ENCODE measurements at regions of chr7 and their contacts with region 1.

Region 1: DNA sequence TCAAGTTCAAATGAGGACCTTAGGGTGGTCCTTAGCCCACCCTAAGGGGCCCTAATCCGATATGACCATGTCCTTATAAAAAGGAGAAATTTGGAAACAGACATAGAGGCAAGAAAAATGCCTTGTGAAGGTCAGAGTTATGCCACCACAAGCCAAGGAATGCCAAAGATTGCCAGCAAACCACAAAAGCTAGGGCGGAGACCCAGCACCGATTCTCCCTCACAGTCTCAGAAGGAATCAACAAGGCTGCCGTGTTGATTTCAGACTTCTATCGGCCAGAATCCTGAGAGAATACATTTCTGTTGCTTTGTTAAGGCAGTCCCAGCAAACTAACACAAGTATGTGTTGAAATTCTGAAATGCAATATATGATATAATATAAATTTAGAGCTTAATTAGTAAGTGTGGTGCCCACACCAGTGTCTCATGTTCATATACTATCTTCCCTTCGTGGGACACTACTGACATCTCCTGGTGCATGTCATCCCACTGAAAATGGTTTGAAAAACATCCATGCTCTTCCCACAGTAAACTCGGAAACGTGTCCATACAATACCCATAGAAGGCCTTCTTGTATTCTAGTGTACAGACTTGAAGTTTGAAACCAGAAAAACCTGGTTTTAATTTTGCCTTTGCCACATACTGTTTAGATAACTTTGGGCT is 349.0 kb downstream of the TNS3 start:
- DNase-seq: no peak
- ATAC-seq: peak; percentile 54

Region 2: DNA sequence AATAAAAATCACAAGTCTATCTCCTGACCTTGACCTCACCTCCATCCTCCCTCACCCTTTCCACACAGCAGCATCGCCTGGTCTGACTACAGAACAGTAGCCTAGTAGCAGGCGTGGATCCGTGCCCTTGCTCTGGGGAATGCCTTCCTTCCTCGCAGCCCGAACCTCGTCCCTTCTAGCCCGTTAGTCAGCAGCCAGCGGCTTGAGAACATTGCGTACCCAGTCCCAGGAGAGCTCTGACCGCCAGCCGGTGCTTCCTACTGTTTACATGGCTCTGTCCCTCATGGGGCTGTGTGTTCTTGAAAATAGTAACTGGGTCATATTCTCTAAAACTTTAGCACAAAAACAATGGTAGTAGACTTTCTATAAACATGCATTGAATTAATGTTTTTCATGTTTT is 629.1 kb before region 1 on chr7:
- intact Hi-C with region 1: loop called (anchors 10 kb)
- DNase-seq: peak; percentile 95
- ATAC-seq: peak; percentile 93

Region 3: DNA sequence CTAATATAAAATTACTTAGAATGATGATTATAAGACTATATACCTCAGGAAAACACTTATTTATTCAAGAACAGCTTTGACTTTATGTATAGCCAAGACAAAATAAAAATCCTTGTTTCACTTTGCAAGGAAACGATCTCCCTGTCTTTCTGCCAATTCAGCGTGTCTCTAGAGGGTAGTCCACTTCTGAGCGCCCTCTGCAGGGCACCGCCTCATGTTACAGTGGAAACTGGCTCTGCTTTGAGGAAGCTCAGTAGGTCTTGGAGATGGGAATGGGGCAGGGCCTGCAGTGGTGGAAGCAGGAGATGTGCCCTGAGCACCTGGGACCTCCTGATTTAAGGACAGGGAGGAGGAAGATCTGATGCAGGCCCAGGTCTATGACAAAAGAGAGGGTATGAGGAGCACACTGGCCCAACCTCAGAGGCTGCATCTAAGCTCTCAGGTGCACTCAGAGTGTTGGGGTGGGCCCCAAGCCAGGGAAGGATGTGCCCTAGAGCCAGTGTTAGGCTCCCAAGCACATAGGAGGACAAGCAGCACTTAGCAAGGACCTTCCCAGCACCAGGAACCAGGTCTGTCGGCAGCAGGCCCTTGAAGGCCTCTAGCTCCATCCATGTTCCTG is 132.0 kb before region 1 on chr7:
- intact Hi-C with region 1: loop called (anchors 10 kb)
- DNase-seq: peak; percentile 80
- ATAC-seq: peak; percentile 65

Region 4: DNA sequence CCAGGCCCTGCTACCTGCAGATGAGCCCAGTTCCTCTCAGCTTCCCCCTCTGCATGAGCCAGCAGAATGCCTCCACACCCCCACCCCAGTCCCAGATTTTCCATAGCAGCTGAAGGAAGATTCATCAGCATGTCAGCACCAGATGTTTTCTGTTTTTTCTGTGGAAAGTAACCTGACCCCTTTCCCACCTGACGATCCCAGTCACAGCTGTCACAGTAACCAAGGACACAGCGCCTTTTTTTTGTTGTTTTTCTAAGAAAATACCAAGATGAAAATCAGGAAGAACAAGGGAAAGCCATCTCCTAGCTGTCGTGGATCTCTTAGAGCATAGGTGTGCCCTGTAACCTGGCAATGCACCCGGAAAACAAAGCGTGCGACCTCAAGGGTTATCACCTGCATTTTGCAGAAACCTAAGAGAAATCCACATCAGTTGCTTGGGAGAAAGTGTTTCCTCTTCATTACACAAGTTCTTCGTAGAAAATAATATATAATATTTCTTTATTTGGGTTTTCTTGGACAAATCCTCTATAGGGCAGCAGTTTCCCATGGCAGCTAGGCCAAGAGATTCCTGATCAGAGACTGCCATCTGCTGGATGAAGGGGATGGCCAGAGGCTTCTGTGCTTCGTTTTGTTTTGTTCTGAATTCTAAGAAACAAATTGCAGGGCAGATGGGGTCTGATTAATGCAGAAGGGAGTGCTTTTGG is 52.9 kb before region 1 on chr7:
- intact Hi-C with region 1: loop called (anchors 10 kb)
- DNase-seq: no peak
- ATAC-seq: peak; percentile 55

Region 5: GRCh38 chr7:47402941-47403866 is 170.3 kb after region 1 on chr7:
- intact Hi-C with region 1: no loop called
- DNase-seq: no peak
- ATAC-seq: no peak